ENCODE measurements at regions of chr6 and their contacts with region 1.

Region 1: GRCh38 chr6:16183187-16183664 is 54.3 kb downstream of the MYLIP start:
- DNase-seq: no peak
- ATAC-seq: peak; percentile 56
- H3K4me3 Mint-ChIP-seq: no peak overlapping the region
- H3K27ac Mint-ChIP-seq: no peak overlapping the region
- H3K4me1 Mint-ChIP-seq: peaks cover 19% of the 10 kb centered on the region
- H3K27me3 Mint-ChIP-seq: no peaks in the 10 kb centered on the region
- CTCF ChIP-seq: peak; percentile 35

Region 2: DNA sequence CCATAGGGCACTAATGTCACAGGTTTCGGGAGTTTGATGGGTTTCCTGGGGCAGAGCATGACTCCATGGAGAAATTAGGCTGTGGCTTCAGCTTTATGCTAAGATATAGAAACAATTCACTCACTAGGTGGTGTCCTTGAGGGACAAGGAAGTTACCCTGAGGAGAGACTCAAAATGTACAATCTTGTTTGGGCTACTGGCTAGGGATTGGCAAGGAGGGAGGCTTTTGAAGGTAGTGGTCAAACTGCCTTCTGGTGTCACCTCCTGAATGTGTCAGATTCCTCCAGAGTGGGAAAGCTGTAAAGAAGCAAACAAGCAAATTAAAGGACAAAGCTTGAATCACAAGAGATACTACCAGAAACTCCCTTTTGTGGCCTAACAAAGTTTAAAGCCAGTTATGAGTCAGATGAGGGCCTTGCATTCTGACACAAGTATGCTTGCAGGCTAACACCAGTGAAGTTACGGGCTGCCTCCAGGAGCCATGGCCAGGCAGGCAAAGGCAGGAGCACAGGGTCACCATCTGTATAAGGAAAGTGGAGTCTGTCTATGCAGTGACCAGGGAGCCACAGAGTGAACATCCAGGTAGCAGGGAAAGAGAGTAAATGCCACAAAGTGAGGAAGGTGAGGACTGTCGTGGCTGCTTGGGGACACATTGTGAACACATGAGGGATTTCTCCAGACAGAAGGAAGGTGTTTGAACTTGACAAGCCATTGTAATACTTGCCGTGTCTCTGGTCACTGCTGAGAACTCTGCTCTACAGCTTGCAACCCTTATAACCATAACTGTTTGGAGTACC is 412.7 kb before region 1 on chr6:
- CTCF ChIA-PET with region 1: interaction called, 9 read pairs
- POLR2A ChIA-PET with region 1: no interaction called
- intact Hi-C with region 1: loop called (anchors 5 kb)
- DNase-seq: no peak
- ATAC-seq: peak; percentile 42
- H3K4me3 Mint-ChIP-seq: no peak overlapping the region
- H3K27ac Mint-ChIP-seq: no peak overlapping the region
- H3K4me1 Mint-ChIP-seq: peaks cover 4% of the 10 kb centered on the region
- H3K27me3 Mint-ChIP-seq: peaks cover 3% of the 10 kb centered on the region
- CTCF ChIP-seq: no peak

Region 3: DNA sequence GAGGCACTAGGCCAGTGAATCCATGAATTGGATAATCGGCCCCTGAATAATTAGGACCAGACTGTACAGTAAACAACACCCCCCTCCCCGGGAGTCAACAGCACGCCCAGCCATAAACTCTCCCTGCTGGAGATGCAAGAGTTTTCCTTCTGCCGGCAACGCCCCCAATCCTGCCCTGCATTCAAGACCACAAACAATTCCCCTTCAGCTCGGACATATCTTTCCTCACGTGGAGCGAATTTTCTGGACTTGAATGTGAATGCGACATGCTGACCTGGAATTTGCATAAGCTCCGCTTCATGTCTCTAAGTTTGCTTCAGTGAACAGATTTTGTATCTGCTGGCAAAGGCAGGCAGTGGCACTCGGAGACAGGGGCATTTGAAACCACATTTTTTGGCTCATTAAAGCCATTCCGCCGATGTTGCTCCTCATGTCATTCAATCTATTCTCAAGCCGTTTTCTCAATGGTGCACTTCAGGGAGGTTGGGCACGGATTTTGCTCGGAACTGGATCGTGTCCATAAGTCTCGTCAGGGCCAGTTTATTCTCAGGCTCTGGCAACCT is 17.2 kb after region 1 on chr6:
- CTCF ChIA-PET with region 1: interaction called, 31 read pairs
- POLR2A ChIA-PET with region 1: no interaction called
- intact Hi-C with region 1: no loop called
- DNase-seq: no peak
- ATAC-seq: no peak
- H3K4me3 Mint-ChIP-seq: no peak overlapping the region
- H3K27ac Mint-ChIP-seq: no peak overlapping the region
- H3K4me1 Mint-ChIP-seq: peaks cover 16% of the 10 kb centered on the region
- H3K27me3 Mint-ChIP-seq: peaks cover 14% of the 10 kb centered on the region
- CTCF ChIP-seq: no peak

Region 4: DNA sequence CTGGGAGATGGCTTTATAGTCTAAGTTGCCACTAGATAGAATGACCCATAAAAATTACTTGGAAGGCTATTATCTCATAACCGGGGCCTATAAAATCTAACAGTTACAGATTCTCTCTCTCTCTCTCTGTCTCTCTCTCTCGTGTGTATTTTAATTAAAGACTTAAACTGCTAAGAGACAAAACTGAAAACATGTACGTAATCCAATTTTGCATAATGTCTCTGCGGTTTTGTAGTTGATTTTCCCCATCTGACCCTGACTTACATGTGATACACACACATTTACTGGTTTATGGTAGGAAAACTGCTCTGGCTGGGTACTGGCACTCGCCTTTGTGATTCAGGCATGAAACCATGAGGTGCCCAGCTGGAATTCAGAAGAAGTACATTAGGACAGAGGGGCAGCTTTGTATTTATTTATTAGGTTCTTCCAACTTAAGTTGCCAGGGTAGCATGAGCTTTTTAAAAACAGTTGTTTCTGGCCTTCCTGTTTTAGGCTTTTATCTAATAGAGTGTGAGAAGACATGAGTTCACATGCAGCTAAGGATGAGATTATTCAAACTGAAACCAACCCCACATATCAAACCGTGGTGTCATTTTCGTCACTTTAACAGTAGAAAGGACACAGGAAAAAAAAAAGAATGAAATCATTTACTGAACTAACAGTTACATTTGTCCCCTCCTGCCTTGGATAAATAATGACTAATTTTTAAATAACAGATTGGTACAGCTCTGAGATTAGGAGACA is 237.7 kb after region 1 on chr6:
- CTCF ChIA-PET with region 1: no interaction called
- POLR2A ChIA-PET with region 1: no interaction called
- intact Hi-C with region 1: no loop called
- DNase-seq: peak; percentile 27
- ATAC-seq: peak; percentile 66
- H3K4me3 Mint-ChIP-seq: peak overlapping the region; percentile 62
- H3K27ac Mint-ChIP-seq: peak overlapping the region; percentile 98
- H3K4me1 Mint-ChIP-seq: peaks cover 47% of the 10 kb centered on the region
- H3K27me3 Mint-ChIP-seq: no peaks in the 10 kb centered on the region
- CTCF ChIP-seq: no peak